Naive thymus-derived CD4-positive, alpha-beta T cell (primary cell): ENCODE measurements at regions of chr17 and their contacts with region 1.

Region 1: GRCh38 chr17:79009397-79010308 is at the start of gene CANT1:
- DNase-seq: peak; percentile 74 to 92 (median 85)
- ATAC-seq: peak; percentile 97
- H3K4me3 ChIP-seq: peak within 1 kb of the TSS; percentile 86
- H3K4me3 Mint-ChIP-seq: peak within 1 kb of the TSS; percentile 85 to 99 (median 92)
- H3K27ac ChIP-seq: peak within 1 kb of the TSS; percentile 86
- H3K27ac Mint-ChIP-seq: peak within 1 kb of the TSS; percentile 90 to 99 (median 96)
- H3K4me1 ChIP-seq: peaks cover 26 to 45% of the 10 kb centered on the region in 2 donors
- H3K4me1 Mint-ChIP-seq: peaks cover 31 to 59% (median 53%) of the 10 kb centered on the region in 7 donors
- H3K27me3 ChIP-seq: no peaks in the 10 kb centered on the region
- H3K27me3 Mint-ChIP-seq: peaks cover 0 to 21% (median 3%) of the 10 kb centered on the region in 5 donors
- total RNA-seq, gene CANT1: 40.1 to 82.2 (median 43.0) TPM

Region 2: GRCh38 chr17:78557598-78558039 is 452.0 kb before region 1 on chr17:
- CTCF ChIA-PET with region 1: no interaction called
- POLR2A ChIA-PET with region 1: no interaction called
- intact Hi-C with region 1: no loop called
- DNase-seq: no peak
- ATAC-seq: no peak
- H3K4me3 ChIP-seq: no peak overlapping the region
- H3K4me3 Mint-ChIP-seq: no peak overlapping the region
- H3K27ac ChIP-seq: no peak overlapping the region
- H3K27ac Mint-ChIP-seq: no peak overlapping the region
- H3K4me1 ChIP-seq: no peaks in the 10 kb centered on the region
- H3K4me1 Mint-ChIP-seq: peaks cover 0 to 2% (median 0%) of the 10 kb centered on the region in 7 donors
- H3K27me3 ChIP-seq: no peaks in the 10 kb centered on the region
- H3K27me3 Mint-ChIP-seq: no peaks in the 10 kb centered on the region

Region 3: DNA sequence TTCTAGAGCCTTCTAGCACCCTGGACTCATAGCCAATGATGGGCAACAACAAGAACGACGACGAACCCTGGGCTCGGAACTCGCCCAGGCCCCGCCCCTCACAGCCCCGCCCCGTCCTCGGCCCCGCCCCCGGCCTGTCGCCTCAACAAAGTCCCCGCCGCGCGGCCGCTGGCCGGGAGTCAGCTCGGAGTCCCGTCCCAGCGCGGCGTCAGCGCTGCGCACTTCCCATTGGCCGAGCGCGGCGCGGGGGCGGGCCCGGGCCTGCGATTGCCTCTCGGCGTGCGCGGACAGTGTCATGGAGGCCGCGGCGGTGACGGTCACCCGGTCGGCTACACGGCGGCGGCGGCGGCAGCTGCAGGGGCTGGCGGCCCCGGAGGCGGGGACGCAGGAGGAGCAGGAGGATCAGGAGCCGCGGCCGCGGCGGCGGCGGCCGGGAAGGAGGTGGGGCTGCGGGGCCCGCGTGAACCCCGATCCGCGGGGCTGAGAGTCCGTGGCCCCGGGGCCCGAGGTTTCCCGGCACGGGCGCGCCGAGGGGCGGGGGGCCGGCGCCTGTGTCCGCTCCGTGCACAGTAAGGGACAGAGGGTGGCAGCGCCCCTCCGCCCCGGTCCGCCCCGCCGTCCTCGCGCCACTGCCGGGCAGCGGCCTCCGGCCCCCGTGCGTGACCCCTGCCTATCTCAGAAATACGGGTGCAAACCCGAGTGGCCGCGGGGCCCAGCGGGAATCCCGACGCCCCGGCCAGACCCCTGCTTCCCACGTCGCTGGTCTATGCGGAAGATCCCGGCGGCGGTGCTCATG is 65.2 kb after region 1 on chr17 and contains the start of gene ENGASE:
- CTCF ChIA-PET with region 1: no interaction called
- POLR2A ChIA-PET with region 1: no interaction called
- intact Hi-C with region 1: loop called in 1 of 2 experiments (anchors 1 kb)
- DNase-seq: peak; percentile 78 to 97 (median 86)
- ATAC-seq: peak; percentile 99
- H3K4me3 ChIP-seq: peak within 1 kb of the TSS; percentile 64
- H3K4me3 Mint-ChIP-seq: peak within 1 kb of the TSS; percentile 85 to 95 (median 90)
- H3K27ac ChIP-seq: peak within 1 kb of the TSS; percentile 74
- H3K27ac Mint-ChIP-seq: peak within 1 kb of the TSS; percentile 64 to 94 (median 88)
- H3K4me1 ChIP-seq: peaks cover 8 to 14% of the 10 kb centered on the region in 2 donors
- H3K4me1 Mint-ChIP-seq: peaks cover 9 to 26% (median 18%) of the 10 kb centered on the region in 7 donors
- H3K27me3 ChIP-seq: no peaks in the 10 kb centered on the region
- H3K27me3 Mint-ChIP-seq: peaks cover 0 to 4% (median 0%) of the 10 kb centered on the region in 5 donors
- total RNA-seq, gene ENGASE: 41.5 to 214 (median 85.9) TPM